ENCODE measurements at regions of chr3 and their contacts with region 1.

Region 1: GRCh38 chr3:49839193-49839809 is 17.1 kb downstream of the TRAIP start:
- DNase-seq: peak; percentile 78
- ATAC-seq: peak; percentile 54
- H3K4me3 Mint-ChIP-seq: no peak overlapping the region
- H3K27ac Mint-ChIP-seq: no peak overlapping the region
- H3K4me1 Mint-ChIP-seq: peaks cover 17% of the 10 kb centered on the region
- H3K27me3 Mint-ChIP-seq: no peaks in the 10 kb centered on the region
- CTCF ChIP-seq: peak; percentile 65

Region 2: DNA sequence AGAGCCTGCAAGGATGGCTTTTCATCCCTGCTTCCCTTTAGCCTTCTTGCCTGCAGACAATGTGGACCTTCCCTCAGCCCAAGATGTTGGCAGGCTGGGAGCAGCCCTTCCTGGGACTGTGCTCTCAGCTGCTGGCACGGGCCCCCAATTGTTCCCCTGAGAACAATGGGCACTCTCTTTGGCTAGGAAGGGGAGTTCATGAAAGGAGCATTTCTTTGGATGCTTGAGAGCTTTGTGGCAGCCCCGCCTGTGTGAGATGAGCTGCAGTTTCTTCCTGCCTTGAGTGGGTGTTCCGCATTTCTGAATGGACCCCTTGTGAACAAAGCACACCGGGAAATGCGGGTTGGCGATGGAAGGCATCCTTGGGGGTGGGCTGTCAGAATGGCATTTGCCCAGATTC is 320.0 kb before region 1 on chr3:
- CTCF ChIA-PET with region 1: no interaction called
- POLR2A ChIA-PET with region 1: no interaction called
- DNase-seq: no peak
- ATAC-seq: no peak
- H3K4me3 Mint-ChIP-seq: no peak overlapping the region
- H3K27ac Mint-ChIP-seq: peak overlapping the region; percentile 84
- H3K4me1 Mint-ChIP-seq: 0 out of 2 replicates have a peak, but pooled peaks cover 6% of the 10 kb centered on the region
- H3K27me3 Mint-ChIP-seq: no peaks in the 10 kb centered on the region
- CTCF ChIP-seq: no peak

Region 3: DNA sequence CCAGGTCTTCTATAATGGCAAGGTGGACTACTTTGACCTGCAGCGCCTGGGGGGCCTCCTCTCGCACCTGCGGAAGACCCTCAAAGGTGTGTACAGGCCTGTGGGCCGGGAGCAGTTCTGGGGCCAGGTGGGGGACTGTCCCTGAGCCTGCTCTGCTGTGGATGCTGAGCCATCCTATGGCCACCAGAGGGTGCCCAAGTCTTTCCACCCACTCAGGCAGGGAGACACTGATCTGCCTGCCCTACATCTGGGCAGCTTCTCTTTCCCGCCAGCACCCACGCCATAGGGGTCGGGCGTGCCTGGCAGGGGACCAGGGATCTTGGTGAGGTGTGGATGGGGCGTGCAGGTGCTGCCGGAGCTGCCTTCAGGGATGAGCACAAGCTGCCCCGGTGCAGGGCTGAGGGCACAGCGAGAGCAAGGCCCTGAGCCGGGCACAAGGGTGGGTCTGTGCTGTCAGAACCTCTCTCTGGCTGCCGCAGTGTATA is 135.8 kb before region 1 on chr3:
- CTCF ChIA-PET with region 1: interaction called, 31 read pairs
- POLR2A ChIA-PET with region 1: no interaction called
- DNase-seq: peak; percentile 75
- ATAC-seq: peak; percentile 91
- H3K4me3 Mint-ChIP-seq: no peak overlapping the region
- H3K27ac Mint-ChIP-seq: no peak overlapping the region; the same call in 1 of the 2 replicates
- H3K4me1 Mint-ChIP-seq: peaks cover 16% of the 10 kb centered on the region
- H3K27me3 Mint-ChIP-seq: no peaks in the 10 kb centered on the region
- CTCF ChIP-seq: peak; percentile 70

Region 4: DNA sequence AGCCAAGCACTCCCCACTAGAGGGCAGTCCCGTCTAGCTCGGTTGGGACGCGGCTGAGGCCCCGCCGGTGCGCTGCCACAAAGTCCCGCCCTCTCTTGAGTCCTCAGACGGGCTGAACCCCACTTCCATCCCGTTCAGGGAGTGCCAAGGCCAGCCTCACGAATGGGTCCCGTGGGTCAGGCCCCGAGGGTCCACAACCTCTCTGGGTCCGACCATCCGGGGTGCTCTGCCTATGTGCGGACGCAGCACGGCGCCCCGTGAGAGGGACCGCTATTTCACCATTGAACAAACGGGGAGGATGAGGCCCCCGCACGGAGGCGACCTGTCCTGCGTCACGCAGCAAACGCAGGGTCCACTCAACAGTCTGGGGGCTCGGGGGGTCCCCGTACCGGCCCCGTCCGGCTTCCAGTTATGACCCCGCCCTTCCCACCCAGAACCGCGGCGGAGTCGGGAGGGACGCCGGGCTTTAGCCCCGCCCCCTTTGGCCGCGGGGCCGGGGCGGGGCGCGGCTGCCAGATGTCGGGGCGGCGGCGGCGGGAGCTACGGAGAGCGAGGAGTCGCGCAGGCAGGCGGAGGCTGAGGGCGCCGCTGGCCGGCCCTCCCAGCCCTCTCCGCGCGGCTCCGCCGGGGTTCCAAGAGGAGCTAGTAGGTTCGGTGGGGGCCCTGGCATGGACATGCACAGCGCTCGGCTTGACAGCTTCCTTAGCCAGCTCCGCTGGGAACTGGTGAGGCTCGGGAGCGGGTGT is 36.4 kb before region 1 on chr3 and contains the start of gene INKA1:
- CTCF ChIA-PET with region 1: interaction called, 207 read pairs
- POLR2A ChIA-PET with region 1: interaction called, 11 read pairs
- DNase-seq: peak; percentile 92
- ATAC-seq: peak; percentile 79
- H3K4me3 Mint-ChIP-seq: peak within 1 kb of the TSS; percentile 86
- H3K27ac Mint-ChIP-seq: peak within 1 kb of the TSS; percentile 94
- H3K4me1 Mint-ChIP-seq: peaks cover 41% of the 10 kb centered on the region
- H3K27me3 Mint-ChIP-seq: peaks cover 40% of the 10 kb centered on the region
- CTCF ChIP-seq: peak; percentile 58
- total RNA-seq, gene INKA1: 1.4 to 2.0 TPM (median 1.5 TPM) in 3 replicates

Region 5: DNA sequence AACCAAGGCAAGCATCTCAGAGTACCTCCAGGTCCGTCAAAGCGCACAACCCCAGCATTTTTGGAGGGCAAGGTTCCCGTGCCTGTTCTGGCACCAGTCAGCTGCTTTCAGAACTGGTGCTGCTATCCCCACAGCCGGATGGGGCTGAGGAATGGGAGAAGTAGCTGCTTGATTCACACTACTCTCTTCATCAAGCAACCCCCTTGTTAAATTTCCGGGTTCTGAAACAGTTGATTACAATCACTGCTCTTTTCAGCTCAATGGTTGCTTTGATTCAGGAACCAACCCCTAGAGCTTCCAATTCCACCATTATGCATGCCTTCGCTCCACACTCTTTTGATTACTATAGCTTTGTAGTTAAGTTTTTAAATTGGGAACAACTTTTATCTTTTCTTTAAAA is 13.3 kb before region 1 on chr3:
- CTCF ChIA-PET with region 1: interaction called, 15 read pairs
- POLR2A ChIA-PET with region 1: no interaction called
- DNase-seq: no peak
- ATAC-seq: no peak
- H3K4me3 Mint-ChIP-seq: no peak overlapping the region
- H3K27ac Mint-ChIP-seq: no peak overlapping the region
- H3K4me1 Mint-ChIP-seq: no peaks in the 10 kb centered on the region
- H3K27me3 Mint-ChIP-seq: no peaks in the 10 kb centered on the region
- CTCF ChIP-seq: no peak

Region 6: DNA sequence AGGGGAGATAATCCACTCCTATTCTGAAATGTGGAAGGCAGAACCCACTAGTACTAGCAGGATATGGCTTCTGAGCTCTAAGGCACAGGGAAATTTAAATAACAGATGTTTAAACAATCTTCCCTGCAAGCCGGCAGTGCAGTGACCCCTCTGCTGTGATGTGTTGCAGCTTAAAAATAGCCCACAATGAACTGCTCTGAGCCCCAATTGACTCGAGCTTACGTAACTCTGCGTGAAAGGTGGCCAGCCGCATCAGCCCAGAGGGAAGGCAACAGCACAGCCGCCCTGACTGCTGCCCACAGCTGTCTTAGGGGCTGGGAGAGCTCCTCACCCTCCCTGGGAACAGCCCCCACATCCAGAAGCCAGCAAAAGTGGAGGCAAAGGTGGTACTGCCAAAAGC is 42.9 kb after region 1 on chr3:
- CTCF ChIA-PET with region 1: interaction called, 10 read pairs
- POLR2A ChIA-PET with region 1: no interaction called
- DNase-seq: no peak
- ATAC-seq: no peak
- H3K4me3 Mint-ChIP-seq: no peak overlapping the region
- H3K27ac Mint-ChIP-seq: no peak overlapping the region; the same call in 1 of the 2 replicates
- H3K4me1 Mint-ChIP-seq: peaks cover 29% of the 10 kb centered on the region
- H3K27me3 Mint-ChIP-seq: no peaks in the 10 kb centered on the region
- CTCF ChIP-seq: no peak

Region 7: GRCh38 chr3:49912881-49913281 is 73.6 kb after region 1 on chr3:
- CTCF ChIA-PET with region 1: interaction called, 16 read pairs
- POLR2A ChIA-PET with region 1: no interaction called
- DNase-seq: no peak
- ATAC-seq: no peak
- H3K4me3 Mint-ChIP-seq: no peak overlapping the region
- H3K27ac Mint-ChIP-seq: peak overlapping the region; percentile 57; the same call in 1 of the 2 replicates
- H3K4me1 Mint-ChIP-seq: peaks cover 27% of the 10 kb centered on the region
- H3K27me3 Mint-ChIP-seq: peaks cover 11% of the 10 kb centered on the region
- CTCF ChIP-seq: no peak

Region 8: GRCh38 chr3:50154840-50155474 is 315.7 kb after region 1 on chr3 and contains the start of gene SEMA3F:
- CTCF ChIA-PET with region 1: no interaction called
- POLR2A ChIA-PET with region 1: no interaction called
- DNase-seq: peak; percentile 67
- ATAC-seq: peak; percentile 38
- H3K4me3 Mint-ChIP-seq: peak within 1 kb of the TSS; percentile 95
- H3K27ac Mint-ChIP-seq: peak within 1 kb of the TSS; percentile 84; the same call in 1 of the 2 replicates
- H3K4me1 Mint-ChIP-seq: peaks cover 71% of the 10 kb centered on the region
- H3K27me3 Mint-ChIP-seq: peaks cover 26% of the 10 kb centered on the region
- CTCF ChIP-seq: no peak
- total RNA-seq, gene SEMA3F: 49.0 to 52.0 TPM (median 52.0 TPM) in 3 replicates

Measured in WTC11 (cell line).